Endothelial cell of umbilical vein (primary cell): ENCODE measurements at regions of chr12 and their contacts with region 1.

Region 1: GRCh38 chr12:118120579-118121363 is 15.2 kb upstream of the PEBP1 start:
- DNase-seq: peak; percentile 52
- H3K4me3 ChIP-seq: no peak overlapping the region
- H3K27ac ChIP-seq: peak overlapping the region; percentile 24
- H3K4me1 ChIP-seq: no peaks in the 10 kb centered on the region
- H3K27me3 ChIP-seq: no peaks in the 10 kb centered on the region
- CTCF ChIP-seq: peak; percentile 22 to 67
- POLR2A ChIP-seq: no peak

Region 2: DNA sequence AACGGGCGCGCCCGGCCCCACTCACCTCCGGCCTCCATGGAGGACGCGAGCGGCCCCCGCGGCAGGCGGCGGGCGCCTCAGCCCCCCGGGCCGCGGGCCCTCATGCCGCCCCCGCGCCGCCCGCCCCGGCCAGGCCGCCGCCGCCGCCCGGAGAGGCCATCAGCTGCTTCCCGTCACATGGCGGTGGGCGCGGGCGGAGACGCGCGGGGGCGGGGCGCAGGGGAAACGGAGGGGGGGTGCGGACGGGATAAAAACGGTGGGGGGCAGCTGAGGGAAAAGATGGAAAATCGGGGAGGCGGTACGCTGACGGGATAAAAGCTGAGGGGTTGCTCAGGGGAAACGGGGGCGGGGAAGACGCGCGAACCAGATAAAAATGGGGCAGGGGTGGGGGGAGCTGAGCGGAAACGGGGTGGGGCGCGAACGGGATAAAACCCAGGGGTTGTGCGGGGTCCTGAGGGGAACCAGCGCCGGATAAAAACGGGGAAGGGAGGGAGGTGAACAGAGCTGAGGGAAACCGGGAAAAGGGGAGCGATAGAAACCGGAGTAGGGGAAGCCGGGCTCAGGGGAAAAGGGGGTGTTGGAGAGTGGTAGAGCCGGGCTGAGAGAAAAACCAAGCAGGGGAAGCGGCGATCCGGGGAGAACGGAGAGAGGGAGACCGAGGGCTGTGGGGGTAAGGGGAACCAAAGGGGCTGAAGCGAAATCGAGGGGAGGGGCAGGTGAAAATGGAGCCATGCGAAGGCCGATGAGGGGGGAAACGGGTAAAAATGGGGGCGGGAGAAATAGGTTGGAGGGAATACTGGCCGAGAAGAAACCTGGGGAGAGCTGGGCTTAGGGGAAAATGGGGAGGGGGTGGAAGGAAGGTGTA is 59.5 kb before region 1 on chr12 and contains the start of gene WSB2:
- CTCF ChIA-PET with region 1: interaction called, 14 read pairs
- POLR2A ChIA-PET with region 1: no interaction called
- dilution Hi-C with region 1: no loop called
- intact Hi-C with region 1: no loop called
- DNase-seq: peak; percentile 64
- H3K4me3 ChIP-seq: peak within 1 kb of the TSS; percentile 61 to 99 (median 81)
- H3K27ac ChIP-seq: peak within 1 kb of the TSS; percentile 89
- H3K4me1 ChIP-seq: peaks cover 17% of the 10 kb centered on the region
- H3K27me3 ChIP-seq: no peaks in the 10 kb centered on the region
- CTCF ChIP-seq: no peak
- POLR2A ChIP-seq: no peak
- total RNA-seq, gene WSB2: 73.6 and 85.3 TPM in 2 replicates

Region 3: DNA sequence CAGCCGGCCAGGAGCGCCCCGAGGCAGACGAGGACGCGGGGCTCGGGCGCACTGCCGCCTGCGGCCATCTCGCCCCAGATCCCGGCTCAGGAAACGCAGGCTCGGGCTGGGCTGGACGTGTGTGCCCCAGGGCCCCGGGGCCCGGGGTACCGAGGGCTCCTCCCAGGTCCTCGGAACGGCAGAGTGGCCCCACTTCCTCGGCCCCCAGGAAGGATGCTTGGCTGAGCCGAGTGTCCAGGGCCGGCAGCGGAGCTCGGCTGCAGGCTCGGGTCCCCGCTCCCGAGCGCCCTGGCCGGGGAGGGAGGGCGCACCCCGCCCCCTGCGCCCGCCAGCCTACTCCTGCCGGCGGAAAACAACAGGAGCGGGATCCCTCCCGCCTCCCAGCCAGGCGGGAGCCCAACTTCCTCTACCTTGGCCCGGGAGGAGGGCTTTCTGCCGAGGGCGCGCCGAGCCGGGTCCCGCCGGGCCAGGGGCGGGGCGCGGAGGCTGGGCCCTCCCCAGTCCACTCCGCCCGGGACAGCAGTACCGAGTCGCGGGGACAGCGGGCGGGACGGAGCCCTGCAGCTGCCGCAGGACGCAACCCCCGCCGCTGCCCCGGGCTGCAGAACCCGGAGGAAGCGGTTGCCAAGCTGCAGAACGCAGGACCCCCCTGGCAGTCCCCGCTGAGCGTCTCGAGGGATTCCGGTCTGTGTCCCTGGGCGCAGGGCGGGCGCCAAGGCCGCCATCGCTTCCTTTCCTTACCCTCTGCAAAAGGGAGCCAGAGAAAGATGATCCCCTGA is 17.0 kb before region 1 on chr12 and contains the start of gene VSIG10:
- CTCF ChIA-PET with region 1: interaction called, 9 read pairs
- POLR2A ChIA-PET with region 1: no interaction called
- dilution Hi-C with region 1: no loop called
- intact Hi-C with region 1: loop called (anchors 1 kb)
- DNase-seq: peak; percentile 74
- H3K4me3 ChIP-seq: peak within 1 kb of the TSS; percentile 48 to 78 (median 52)
- H3K27ac ChIP-seq: peak within 1 kb of the TSS; percentile 61
- H3K4me1 ChIP-seq: peaks cover 11% of the 10 kb centered on the region
- H3K27me3 ChIP-seq: no peaks in the 10 kb centered on the region
- CTCF ChIP-seq: no peak
- POLR2A ChIP-seq: no peak
- total RNA-seq, gene VSIG10: 38.4 and 38.6 TPM in 2 replicates

Region 4: GRCh38 chr12:118135788-118136558 is 15.2 kb after region 1 on chr12 and contains the start of gene PEBP1:
- CTCF ChIA-PET with region 1: interaction called, 9 read pairs
- POLR2A ChIA-PET with region 1: no interaction called
- dilution Hi-C with region 1: no loop called
- intact Hi-C with region 1: loop called (anchors 1 kb)
- DNase-seq: peak; percentile 94
- H3K4me3 ChIP-seq: peak within 1 kb of the TSS; percentile 48 to 82 (median 75)
- H3K27ac ChIP-seq: peak within 1 kb of the TSS; percentile 49
- H3K4me1 ChIP-seq: peaks cover 4% of the 10 kb centered on the region
- H3K27me3 ChIP-seq: no peaks in the 10 kb centered on the region
- CTCF ChIP-seq: no peak
- POLR2A ChIP-seq: peak; percentile 91
- total RNA-seq, gene PEBP1: 146 and 185 TPM in 2 replicates

Region 5: DNA sequence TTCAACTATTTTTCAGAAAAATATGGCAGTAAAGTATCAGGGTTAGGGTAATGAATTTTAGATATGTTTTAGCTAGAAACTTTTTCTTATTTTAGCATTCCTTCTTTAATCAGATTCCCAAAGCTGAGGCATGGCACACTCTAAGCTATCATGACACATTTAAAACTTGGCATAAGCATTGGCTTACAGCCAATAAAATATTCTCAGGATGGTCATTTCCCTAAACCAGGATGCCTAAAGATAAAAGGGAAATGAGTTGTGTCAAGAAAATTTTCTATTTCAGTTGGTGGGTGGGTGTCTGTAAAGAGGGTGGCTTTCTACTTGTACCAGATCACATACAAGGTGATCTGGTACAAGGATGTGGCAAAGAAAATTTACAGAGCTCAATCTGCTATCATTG is 62.9 kb after region 1 on chr12:
- CTCF ChIA-PET with region 1: no interaction called
- POLR2A ChIA-PET with region 1: no interaction called
- dilution Hi-C with region 1: no loop called
- intact Hi-C with region 1: loop called (anchors 2 kb)
- DNase-seq: peak; percentile 63
- H3K4me3 ChIP-seq: no peak overlapping the region
- H3K27ac ChIP-seq: peak overlapping the region; percentile 25
- H3K4me1 ChIP-seq: peaks cover 33% of the 10 kb centered on the region
- H3K27me3 ChIP-seq: no peaks in the 10 kb centered on the region
- CTCF ChIP-seq: no peak
- POLR2A ChIP-seq: no peak

Region 6: DNA sequence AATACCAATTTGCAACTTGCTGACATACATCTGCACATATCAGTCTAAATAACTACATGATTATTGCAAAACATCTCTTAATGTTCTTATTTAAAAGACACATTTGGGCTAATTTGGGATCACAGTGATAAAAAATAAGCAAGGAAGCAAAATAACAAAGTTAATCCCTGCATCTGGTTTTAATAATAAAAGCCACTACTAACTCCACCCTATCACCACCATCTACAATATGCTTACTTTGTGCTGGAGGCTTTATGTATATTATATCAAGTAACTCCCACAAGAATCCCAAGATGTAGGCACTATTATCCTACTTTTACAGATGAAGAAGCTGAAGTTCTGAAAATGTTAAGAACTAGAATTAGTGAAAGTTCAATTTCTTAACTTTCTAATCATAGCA is 206.2 kb after region 1 on chr12:
- CTCF ChIA-PET with region 1: no interaction called
- POLR2A ChIA-PET with region 1: no interaction called
- dilution Hi-C with region 1: no loop called
- intact Hi-C with region 1: no loop called
- DNase-seq: no peak
- H3K4me3 ChIP-seq: no peak overlapping the region
- H3K27ac ChIP-seq: no peak overlapping the region
- H3K4me1 ChIP-seq: peaks cover 18% of the 10 kb centered on the region
- H3K27me3 ChIP-seq: no peaks in the 10 kb centered on the region
- CTCF ChIP-seq: no peak
- POLR2A ChIP-seq: no peak

Region 7: GRCh38 chr12:119036878-119037825 is 916.4 kb after region 1 on chr12:
- CTCF ChIA-PET with region 1: interaction called, 6 read pairs
- POLR2A ChIA-PET with region 1: no interaction called
- dilution Hi-C with region 1: no loop called
- intact Hi-C with region 1: loop called (anchors 5 kb)
- DNase-seq: no peak
- H3K4me3 ChIP-seq: no peak overlapping the region
- H3K27ac ChIP-seq: no peak overlapping the region
- H3K4me1 ChIP-seq: no peaks in the 10 kb centered on the region
- H3K27me3 ChIP-seq: no peaks in the 10 kb centered on the region
- CTCF ChIP-seq: peak; percentile 34 to 40
- POLR2A ChIP-seq: no peak